Ovary (tissue), 10 donors: ENCODE measurements at regions of chr10 and their contacts with region 1.

Region 1: DNA sequence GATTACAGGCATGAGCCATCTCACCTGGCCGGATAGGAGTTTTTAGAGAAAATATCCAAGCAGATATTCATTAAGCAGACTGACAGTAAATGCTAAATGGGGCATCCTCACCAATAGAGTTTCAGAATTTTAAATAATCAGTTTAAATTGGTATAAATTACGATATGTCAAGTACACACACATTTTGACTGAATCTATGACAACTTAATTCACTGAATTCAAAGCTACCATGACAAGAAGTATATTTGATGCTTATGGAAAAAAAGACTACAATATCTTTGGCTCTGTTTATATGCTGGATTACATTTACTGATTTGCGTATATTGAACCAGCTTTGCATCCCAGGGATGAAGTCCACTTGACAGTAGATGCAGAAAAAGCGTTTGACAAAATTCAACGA is 774.7 kb downstream of the PCDH15 start:
- DNase-seq: no peak
- H3K4me3 ChIP-seq: no peak overlapping the region
- H3K27ac ChIP-seq: no peak overlapping the region
- H3K4me1 ChIP-seq: no peaks in the 10 kb centered on the region
- H3K27me3 ChIP-seq: no peaks in the 10 kb centered on the region
- CTCF ChIP-seq: no peak
- EP300 ChIP-seq: no peak
- POLR2A ChIP-seq: no peak

Region 2: GRCh38 chr10:53997953-53998352 is 28.4 kb before region 1 on chr10:
- intact Hi-C with region 1: no loop called
- DNase-seq: no peak
- H3K4me3 ChIP-seq: no peak overlapping the region
- H3K27ac ChIP-seq: no peak overlapping the region
- H3K4me1 ChIP-seq: no peaks in the 10 kb centered on the region
- H3K27me3 ChIP-seq: no peaks in the 10 kb centered on the region
- CTCF ChIP-seq: no peak
- EP300 ChIP-seq: no peak
- POLR2A ChIP-seq: no peak

Region 3: DNA sequence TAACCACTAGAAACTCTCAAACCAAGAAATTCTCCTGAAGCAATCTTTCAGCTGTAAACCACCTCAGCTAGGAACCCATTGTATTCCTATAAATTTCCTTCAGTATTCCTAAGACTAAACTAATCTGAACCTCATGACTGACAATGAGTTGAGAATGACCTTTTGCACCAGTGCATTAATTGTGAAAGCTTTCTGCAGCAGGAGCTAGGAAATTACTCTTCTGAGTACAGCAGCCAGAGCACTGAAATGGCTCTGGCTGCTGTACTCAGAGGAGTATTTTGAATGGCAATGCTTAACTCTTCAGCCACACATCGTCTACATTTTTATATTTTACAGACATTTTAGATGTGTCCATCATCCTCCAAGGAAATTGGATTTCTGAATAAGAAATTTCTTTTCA is 665.0 kb after region 1 on chr10:
- intact Hi-C with region 1: loop called in 1 of 4 experiments (anchors 10 kb)
- DNase-seq: no peak
- H3K4me3 ChIP-seq: no peak overlapping the region
- H3K27ac ChIP-seq: no peak overlapping the region
- H3K4me1 ChIP-seq: no peaks in the 10 kb centered on the region
- H3K27me3 ChIP-seq: no peaks in the 10 kb centered on the region
- CTCF ChIP-seq: no peak
- EP300 ChIP-seq: no peak
- POLR2A ChIP-seq: no peak